Head of caudate nucleus (tissue), 42 donors: ENCODE measurements at regions of chr9 and their contacts with region 1.

Region 1: GRCh38 chr9:137578518-137579258 is at the start of gene DPH7:
- DNase-seq: peak; percentile 91 to 100 (median 98)

Region 2: DNA sequence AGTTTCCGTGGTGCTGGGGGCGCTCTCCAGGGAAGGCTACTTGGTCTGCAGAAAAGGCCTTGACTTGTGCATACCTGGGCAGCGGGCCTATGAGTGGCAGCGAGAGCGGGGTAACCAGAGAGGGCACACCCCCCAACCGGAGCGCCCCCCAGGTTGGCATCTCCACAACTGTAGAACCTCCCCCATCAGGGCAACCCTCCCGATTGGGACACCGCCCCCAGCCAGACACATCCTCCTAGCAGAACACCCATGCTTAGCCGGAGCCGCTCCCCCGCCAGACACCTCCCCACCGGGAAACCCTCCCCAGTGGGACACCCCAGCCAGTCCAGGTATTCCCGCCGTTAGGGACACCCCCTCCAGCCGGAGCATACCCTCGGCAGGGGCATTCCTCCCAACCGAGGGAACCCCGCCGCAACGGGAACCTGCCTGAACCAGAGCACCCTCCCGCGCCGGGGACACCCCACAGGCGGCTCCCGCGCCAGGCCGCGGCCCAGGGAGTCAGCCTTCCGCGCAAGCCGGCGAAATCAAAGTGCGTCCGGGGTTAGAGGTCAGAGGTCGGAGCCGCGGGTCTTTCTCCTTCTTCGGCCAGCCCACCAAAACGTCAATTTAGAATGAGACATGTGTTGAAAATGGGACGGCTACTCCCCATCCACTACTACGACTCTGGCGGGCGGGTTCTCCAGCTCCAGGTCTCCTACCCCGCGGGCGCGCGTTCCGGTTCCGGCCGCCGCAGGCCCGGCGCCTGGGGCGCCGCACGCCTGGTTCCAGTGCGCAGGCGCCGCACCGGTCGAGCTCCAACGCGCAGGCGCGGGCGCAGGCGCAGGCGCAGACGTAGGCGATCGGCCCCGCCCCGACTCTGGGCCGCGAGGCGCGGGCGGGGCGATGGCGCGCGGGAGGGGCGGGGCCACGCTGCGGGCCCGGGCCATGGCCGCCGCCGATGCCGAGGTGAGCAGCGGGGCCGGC is 39.7 kb after region 1 on chr9 and contains the start of gene EHMT1:
- intact Hi-C with region 1: loop called (anchors 5 kb)
- DNase-seq: peak; percentile 54 to 93 (median 85)